Psoas muscle (tissue), 8 donors: ENCODE measurements at regions of chr1 and their contacts with region 1.

Region 1: GRCh38 chr1:245156081-245156735 is 1.4 kb downstream of the KIF26B start:
- DNase-seq: peak; percentile 77 to 88
- ATAC-seq: peak; percentile 87 to 92 (median 90)
- H3K4me3 ChIP-seq: peak overlapping the region; percentile 64
- H3K27ac ChIP-seq: no peak overlapping the region
- H3K4me1 ChIP-seq: peaks cover 29% of the 10 kb centered on the region
- H3K27me3 ChIP-seq: peaks cover 0 to 86% (median 20%) of the 10 kb centered on the region in 3 donors
- CTCF ChIP-seq: peak; percentile 71

Region 2: DNA sequence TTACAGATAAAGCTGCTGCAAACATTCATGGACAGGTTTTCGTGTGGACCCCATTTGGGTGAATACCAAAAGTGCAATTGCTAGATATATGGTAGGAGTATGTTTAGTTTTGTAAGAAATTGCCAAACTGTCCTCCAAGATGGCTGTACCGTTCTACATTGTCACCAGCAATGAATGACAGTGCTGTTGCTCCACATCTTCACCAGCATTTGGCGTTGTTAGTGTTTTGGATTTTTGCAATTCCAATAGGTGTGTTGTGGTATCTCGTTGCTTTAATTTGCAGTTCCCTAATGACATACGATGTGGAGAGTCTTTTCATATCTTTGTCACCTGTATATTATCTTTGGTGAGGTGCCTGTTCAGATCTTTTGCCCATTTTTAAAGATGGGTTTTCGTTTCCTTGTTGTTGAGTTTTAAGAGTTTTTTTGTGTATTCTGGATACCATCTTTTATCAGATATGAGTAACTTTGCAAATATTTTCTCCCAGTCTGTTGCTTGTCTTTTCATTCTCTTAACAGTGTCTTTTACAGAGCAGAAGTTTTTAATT is 683.1 kb before region 1 on chr1:
- intact Hi-C with region 1: no loop called
- DNase-seq: no peak
- ATAC-seq: no peak
- H3K4me3 ChIP-seq: no peak overlapping the region
- H3K27ac ChIP-seq: no peak overlapping the region
- H3K4me1 ChIP-seq: no peaks in the 10 kb centered on the region
- H3K27me3 ChIP-seq: no peaks in the 10 kb centered on the region
- CTCF ChIP-seq: no peak

Region 3: GRCh38 chr1:245380790-245381535 is 224.8 kb after region 1 on chr1:
- intact Hi-C with region 1: loop called in 1 of 2 experiments (anchors 2 kb)
- DNase-seq: no peak
- ATAC-seq: no peak
- H3K4me3 ChIP-seq: no peak overlapping the region
- H3K27ac ChIP-seq: no peak overlapping the region
- H3K4me1 ChIP-seq: no peaks in the 10 kb centered on the region
- H3K27me3 ChIP-seq: peaks cover 0 to 3% (median 0%) of the 10 kb centered on the region in 3 donors
- CTCF ChIP-seq: peak; percentile 18

Region 4: DNA sequence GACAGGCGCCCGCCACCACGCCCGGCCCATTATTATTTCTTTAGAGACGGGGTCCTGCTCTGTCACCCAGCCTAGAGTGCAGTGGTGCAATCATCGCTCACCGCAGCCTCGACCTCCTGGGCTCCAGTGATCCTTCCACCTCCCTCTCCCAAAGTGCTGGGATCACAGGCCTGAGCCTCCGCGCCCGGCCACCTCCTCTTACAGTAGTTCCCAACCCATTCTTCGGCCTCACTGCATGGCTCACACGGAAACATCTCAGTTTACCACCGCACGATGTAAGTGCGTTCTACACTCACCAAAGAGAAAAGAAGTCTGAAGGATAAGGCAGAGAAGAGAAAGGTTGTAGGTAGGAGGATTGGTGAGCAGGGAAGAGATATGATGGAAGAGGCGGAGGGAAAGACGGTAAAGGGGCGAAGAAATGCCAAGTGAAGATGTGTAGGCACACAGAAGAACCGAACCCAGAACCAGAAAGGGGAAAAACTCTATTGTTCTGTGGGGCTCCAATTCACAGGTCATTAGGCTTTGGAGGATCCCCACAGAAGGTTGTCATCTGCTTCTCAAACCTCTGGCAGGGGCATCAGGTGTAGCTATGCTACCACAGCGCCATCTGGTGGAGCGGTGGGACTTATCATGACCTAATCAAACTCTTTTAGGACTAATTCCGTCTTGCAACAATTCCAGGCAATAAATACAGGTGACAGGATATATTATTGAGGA is 846.7 kb after region 1 on chr1:
- intact Hi-C with region 1: loop called (anchors 1 to 5 kb)
- DNase-seq: peak; percentile 81 to 87
- ATAC-seq: peak; percentile 69 to 87 (median 76)
- H3K4me3 ChIP-seq: no peak overlapping the region
- H3K27ac ChIP-seq: no peak overlapping the region
- H3K4me1 ChIP-seq: peaks cover 5% of the 10 kb centered on the region
- H3K27me3 ChIP-seq: no peaks in the 10 kb centered on the region
- CTCF ChIP-seq: peak; percentile 84

Region 5: DNA sequence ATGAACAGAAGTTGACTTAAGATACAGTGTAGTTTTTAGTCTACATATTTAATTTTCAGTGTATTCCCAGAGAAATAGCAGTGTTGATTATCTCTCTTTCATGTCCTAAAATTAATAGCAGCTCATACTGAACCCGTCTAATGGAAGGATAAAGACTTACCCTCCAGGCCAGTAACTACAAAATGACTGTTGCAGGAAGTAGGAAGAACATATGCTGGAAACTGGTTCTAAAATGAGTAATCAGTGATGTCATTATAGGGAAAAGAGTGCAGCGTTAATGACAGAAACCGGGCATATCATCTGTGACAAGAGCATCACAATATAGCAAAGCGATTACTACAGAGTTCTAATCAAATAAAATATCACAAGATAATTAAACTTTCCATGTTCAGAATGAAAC is 965.3 kb after region 1 on chr1:
- intact Hi-C with region 1: loop called in 1 of 2 experiments (anchors 5 kb)
- DNase-seq: no peak
- ATAC-seq: no peak
- H3K4me3 ChIP-seq: no peak overlapping the region
- H3K27ac ChIP-seq: no peak overlapping the region
- H3K4me1 ChIP-seq: no peaks in the 10 kb centered on the region
- H3K27me3 ChIP-seq: no peaks in the 10 kb centered on the region
- CTCF ChIP-seq: no peak

Region 6: GRCh38 chr1:246450611-246451251 is 1294.5 kb after region 1 on chr1:
- intact Hi-C with region 1: loop called (anchors 2 to 10 kb)
- DNase-seq: no peak
- ATAC-seq: peak in 3 of 4 donors; percentile 37 to 73 (median 53)
- H3K4me3 ChIP-seq: no peak overlapping the region
- H3K27ac ChIP-seq: no peak overlapping the region
- H3K4me1 ChIP-seq: peaks cover 7% of the 10 kb centered on the region
- H3K27me3 ChIP-seq: no peaks in the 10 kb centered on the region
- CTCF ChIP-seq: peak; percentile 72